ENCODE measurements at regions of chr11 and their contacts with region 1.

Region 1: GRCh38 chr11:69718147-69718546 is 14.3 kb upstream of the FGF19 start:
- DNase-seq: peak; percentile 69 to 74
- H3K4me3 ChIP-seq: no peak overlapping the region
- H3K4me3 Mint-ChIP-seq: no peak overlapping the region
- H3K27ac Mint-ChIP-seq: no peak overlapping the region
- H3K4me1 ChIP-seq: no peaks in the 10 kb centered on the region
- H3K4me1 Mint-ChIP-seq: no peaks in the 10 kb centered on the region
- H3K27me3 ChIP-seq: no peaks in the 10 kb centered on the region
- H3K27me3 Mint-ChIP-seq: peaks cover 5% of the 10 kb centered on the region
- CTCF ChIP-seq: peak; percentile 70 to 85

Region 2: GRCh38 chr11:69576069-69576782 is 141.9 kb before region 1 on chr11:
- CTCF ChIA-PET with region 1: no interaction called
- POLR2A ChIA-PET with region 1: no interaction called
- intact Hi-C with region 1: no loop called
- DNase-seq: peak; percentile 54 to 68
- H3K4me3 ChIP-seq: no peak overlapping the region
- H3K4me3 Mint-ChIP-seq: no peak overlapping the region
- H3K27ac Mint-ChIP-seq: no peak overlapping the region
- H3K4me1 ChIP-seq: peaks cover 20% of the 10 kb centered on the region
- H3K4me1 Mint-ChIP-seq: peaks cover 10% of the 10 kb centered on the region
- H3K27me3 ChIP-seq: no peaks in the 10 kb centered on the region
- H3K27me3 Mint-ChIP-seq: no peaks in the 10 kb centered on the region
- CTCF ChIP-seq: no peak

Region 3: GRCh38 chr11:69670158-69670845 is 47.8 kb before region 1 on chr11:
- CTCF ChIA-PET with region 1: interaction called, 10 read pairs
- POLR2A ChIA-PET with region 1: no interaction called
- intact Hi-C with region 1: no loop called
- DNase-seq: peak; percentile 89 to 93
- H3K4me3 ChIP-seq: no peak overlapping the region
- H3K4me3 Mint-ChIP-seq: no peak overlapping the region
- H3K27ac Mint-ChIP-seq: peak overlapping the region; percentile 34
- H3K4me1 ChIP-seq: peaks cover 15% of the 10 kb centered on the region
- H3K4me1 Mint-ChIP-seq: peaks cover 17% of the 10 kb centered on the region
- H3K27me3 ChIP-seq: no peaks in the 10 kb centered on the region
- H3K27me3 Mint-ChIP-seq: peaks cover under 1% of the 10 kb centered on the region
- CTCF ChIP-seq: peak; percentile 99

Region 4: GRCh38 chr11:69888483-69889076 is 170.4 kb after region 1 on chr11:
- CTCF ChIA-PET with region 1: interaction called, 6 read pairs
- POLR2A ChIA-PET with region 1: no interaction called
- intact Hi-C with region 1: loop called (anchors 1 kb)
- DNase-seq: peak; percentile 89 to 92
- H3K4me3 ChIP-seq: no peak overlapping the region
- H3K4me3 Mint-ChIP-seq: no peak overlapping the region
- H3K27ac Mint-ChIP-seq: no peak overlapping the region
- H3K4me1 ChIP-seq: peaks cover 12% of the 10 kb centered on the region; the same call in 1 of the 2 replicates
- H3K4me1 Mint-ChIP-seq: no peaks in the 10 kb centered on the region
- H3K27me3 ChIP-seq: no peaks in the 10 kb centered on the region
- H3K27me3 Mint-ChIP-seq: peaks cover 12% of the 10 kb centered on the region
- CTCF ChIP-seq: peak; percentile 98 to 99

Measured in Caco-2 (cell line).